CD8-positive, alpha-beta T cell (primary cell): ENCODE measurements at regions of chr11 and their contacts with region 1.

Region 1: GRCh38 chr11:67265633-67266423 is 445 bp upstream of the GRK2 start:
- DNase-seq: peak; percentile 56 to 91 (median 79)
- ATAC-seq: peak; percentile 35
- H3K4me3 ChIP-seq: no peak overlapping the region
- H3K4me3 Mint-ChIP-seq: peak overlapping the region; percentile 81
- H3K27ac ChIP-seq: peak overlapping the region in 1 of 2 experiments; percentile 51
- H3K27ac Mint-ChIP-seq: peak overlapping the region; percentile 86
- H3K4me1 ChIP-seq: peaks cover 61% of the 10 kb centered on the region
- H3K4me1 Mint-ChIP-seq: peaks cover 69% of the 10 kb centered on the region
- H3K27me3 ChIP-seq: peaks cover 0 to 4% of the 10 kb centered on the region in 2 experiments
- H3K27me3 Mint-ChIP-seq: no peaks in the 10 kb centered on the region
- CTCF ChIP-seq: peak; percentile 67

Region 2: GRCh38 chr11:67239783-67240575 is 25.8 kb before region 1 on chr11:
- CTCF ChIA-PET with region 1: interaction called, 14 read pairs
- POLR2A ChIA-PET with region 1: interaction called, 20 read pairs
- intact Hi-C with region 1: no loop called
- DNase-seq: peak; percentile 89 to 99 (median 95)
- ATAC-seq: peak; percentile 89
- H3K4me3 ChIP-seq: peak overlapping the region; percentile 87 to 98
- H3K4me3 Mint-ChIP-seq: peak overlapping the region; percentile 96
- H3K27ac ChIP-seq: peak overlapping the region; percentile 95 to 96
- H3K27ac Mint-ChIP-seq: peak overlapping the region; percentile 100
- H3K4me1 ChIP-seq: peaks cover 40% of the 10 kb centered on the region
- H3K4me1 Mint-ChIP-seq: peaks cover 56% of the 10 kb centered on the region
- H3K27me3 ChIP-seq: no peaks in the 10 kb centered on the region
- H3K27me3 Mint-ChIP-seq: no peaks in the 10 kb centered on the region
- CTCF ChIP-seq: no peak

Region 3: GRCh38 chr11:67277231-67277961 is 11.6 kb after region 1 on chr11:
- CTCF ChIA-PET with region 1: interaction called, 19 read pairs
- POLR2A ChIA-PET with region 1: interaction called, 426 read pairs
- intact Hi-C with region 1: loop called (anchors 1 kb)
- DNase-seq: peak; percentile 82 to 98 (median 93)
- ATAC-seq: peak; percentile 92
- H3K4me3 ChIP-seq: peak overlapping the region; percentile 46 to 79
- H3K4me3 Mint-ChIP-seq: peak overlapping the region; percentile 79
- H3K27ac ChIP-seq: peak overlapping the region; percentile 74 to 76
- H3K27ac Mint-ChIP-seq: peak overlapping the region; percentile 95
- H3K4me1 ChIP-seq: peaks cover 100% of the 10 kb centered on the region
- H3K4me1 Mint-ChIP-seq: peaks cover 68% of the 10 kb centered on the region
- H3K27me3 ChIP-seq: no peaks in the 10 kb centered on the region
- H3K27me3 Mint-ChIP-seq: no peaks in the 10 kb centered on the region
- CTCF ChIP-seq: no peak

Region 4: GRCh38 chr11:67288452-67289225 is 22.8 kb after region 1 on chr11:
- CTCF ChIA-PET with region 1: interaction called, 77 read pairs
- POLR2A ChIA-PET with region 1: interaction called, 426 read pairs
- intact Hi-C with region 1: loop called (anchors 1 kb)
- DNase-seq: peak; percentile 78 to 97 (median 92)
- ATAC-seq: peak; percentile 67
- H3K4me3 ChIP-seq: peak overlapping the region; percentile 90 to 92
- H3K4me3 Mint-ChIP-seq: peak overlapping the region; percentile 80
- H3K27ac ChIP-seq: peak overlapping the region; percentile 79 to 98
- H3K27ac Mint-ChIP-seq: peak overlapping the region; percentile 98
- H3K4me1 ChIP-seq: peaks cover 64% of the 10 kb centered on the region
- H3K4me1 Mint-ChIP-seq: peaks cover 59% of the 10 kb centered on the region
- H3K27me3 ChIP-seq: no peaks in the 10 kb centered on the region
- H3K27me3 Mint-ChIP-seq: no peaks in the 10 kb centered on the region
- CTCF ChIP-seq: peak; percentile 58

Region 5: GRCh38 chr11:67317205-67317887 is 51.5 kb after region 1 on chr11:
- CTCF ChIA-PET with region 1: interaction called, 144 read pairs
- POLR2A ChIA-PET with region 1: interaction called, 37 read pairs
- intact Hi-C with region 1: loop called (anchors 1 kb)
- DNase-seq: peak; percentile 96 to 99 (median 98)
- ATAC-seq: peak; percentile 76
- H3K4me3 ChIP-seq: peak overlapping the region; percentile 68 to 82
- H3K4me3 Mint-ChIP-seq: peak overlapping the region; percentile 97
- H3K27ac ChIP-seq: peak overlapping the region; percentile 63 to 73
- H3K27ac Mint-ChIP-seq: peak overlapping the region; percentile 94
- H3K4me1 ChIP-seq: peaks cover 23% of the 10 kb centered on the region
- H3K4me1 Mint-ChIP-seq: peaks cover 32% of the 10 kb centered on the region
- H3K27me3 ChIP-seq: no peaks in the 10 kb centered on the region
- H3K27me3 Mint-ChIP-seq: no peaks in the 10 kb centered on the region
- CTCF ChIP-seq: peak; percentile 70

Region 6: GRCh38 chr11:67373925-67374618 is 108.2 kb after region 1 on chr11:
- CTCF ChIA-PET with region 1: interaction called, 6 read pairs
- POLR2A ChIA-PET with region 1: no interaction called
- intact Hi-C with region 1: loop called in 1 of 2 experiments (anchors 5 kb)
- DNase-seq: peak in 7 of 9 experiments; percentile 41 to 75 (median 59)
- ATAC-seq: peak; percentile 27
- H3K4me3 ChIP-seq: peak overlapping the region; percentile 43 to 61
- H3K4me3 Mint-ChIP-seq: peak overlapping the region; percentile 79
- H3K27ac ChIP-seq: peak overlapping the region in 1 of 2 experiments; percentile 21
- H3K27ac Mint-ChIP-seq: no peak overlapping the region
- H3K4me1 ChIP-seq: peaks cover 47% of the 10 kb centered on the region
- H3K4me1 Mint-ChIP-seq: peaks cover 48% of the 10 kb centered on the region
- H3K27me3 ChIP-seq: no peaks in the 10 kb centered on the region
- H3K27me3 Mint-ChIP-seq: peaks cover 8% of the 10 kb centered on the region
- CTCF ChIP-seq: peak; percentile 47